HCT116 (cell line): ENCODE measurements at regions of chr6 and their contacts with region 1.

Region 1: DNA sequence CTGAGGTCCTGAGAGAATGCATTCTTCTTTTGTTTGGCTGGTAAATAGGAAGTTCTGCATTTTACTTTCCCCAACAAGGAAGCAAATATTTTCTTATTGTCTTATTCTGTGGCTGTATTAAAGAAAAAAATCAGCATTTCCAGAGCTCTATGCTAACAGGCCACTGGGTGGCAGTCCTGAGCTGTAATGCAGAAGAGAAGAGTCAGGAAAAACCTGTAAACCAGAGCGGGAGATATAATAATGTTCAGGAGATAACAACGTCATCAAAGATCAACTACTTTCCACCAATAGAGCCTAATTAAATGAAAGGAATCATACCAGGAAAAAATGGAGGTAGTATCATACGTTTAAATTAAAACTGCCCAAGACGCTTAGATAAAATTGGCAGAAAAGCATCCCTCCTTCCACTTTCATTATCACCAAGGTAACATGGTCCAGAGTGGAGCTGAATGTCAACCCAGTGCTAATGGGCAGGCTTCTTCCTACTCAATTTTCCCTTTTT is 55.6 kb upstream of the CARMIL1 start:
- DNase-seq: peak; percentile 61
- ATAC-seq: peak; percentile 80
- H3K4me3 ChIP-seq: peak overlapping the region; percentile 18 to 23; a peak in 3 of 4 replicates
- H3K27ac ChIP-seq: no peak overlapping the region
- H3K4me1 ChIP-seq: no peaks in the 10 kb centered on the region; a peak in 1 of 4 replicates
- H3K27me3 ChIP-seq: no peaks in the 10 kb centered on the region
- CTCF ChIP-seq: peak; percentile 76 to 95 (median 89)
- POLR2A ChIP-seq: no peak
- RAD21 ChIP-seq: peak; percentile 93

Region 2: GRCh38 chr6:25490018-25490801 is 266.7 kb after region 1 on chr6:
- CTCF ChIA-PET with region 1: interaction called, 23 read pairs
- POLR2A ChIA-PET with region 1: no interaction called
- RAD21 ChIA-PET with region 1: no interaction called
- intact Hi-C with region 1: loop called (anchors 1 kb)
- DNase-seq: peak; percentile 69
- ATAC-seq: peak; percentile 98
- H3K4me3 ChIP-seq: no peak overlapping the region
- H3K27ac ChIP-seq: no peak overlapping the region
- H3K4me1 ChIP-seq: peaks cover 0 to 16% of the 10 kb centered on the region in 2 experiments; a peak in 1 of 4 replicates
- H3K27me3 ChIP-seq: no peaks in the 10 kb centered on the region
- CTCF ChIP-seq: peak; percentile 83 to 84 (median 84)
- POLR2A ChIP-seq: no peak
- RAD21 ChIP-seq: peak; percentile 88

Region 3: GRCh38 chr6:25556516-25556915 is 333.0 kb after region 1 on chr6:
- CTCF ChIA-PET with region 1: interaction called, 28 read pairs
- POLR2A ChIA-PET with region 1: interaction called, 3 read pairs
- RAD21 ChIA-PET with region 1: interaction called in 1 of 2 experiments, 3 read pairs
- intact Hi-C with region 1: loop called (anchors 2 kb)
- DNase-seq: peak; percentile 71
- ATAC-seq: peak; percentile 87
- H3K4me3 ChIP-seq: no peak overlapping the region
- H3K27ac ChIP-seq: no peak overlapping the region
- H3K4me1 ChIP-seq: no peaks in the 10 kb centered on the region
- H3K27me3 ChIP-seq: no peaks in the 10 kb centered on the region
- CTCF ChIP-seq: peak; percentile 56 to 89 (median 79)
- POLR2A ChIP-seq: no peak
- RAD21 ChIP-seq: peak; percentile 65

Region 4: DNA sequence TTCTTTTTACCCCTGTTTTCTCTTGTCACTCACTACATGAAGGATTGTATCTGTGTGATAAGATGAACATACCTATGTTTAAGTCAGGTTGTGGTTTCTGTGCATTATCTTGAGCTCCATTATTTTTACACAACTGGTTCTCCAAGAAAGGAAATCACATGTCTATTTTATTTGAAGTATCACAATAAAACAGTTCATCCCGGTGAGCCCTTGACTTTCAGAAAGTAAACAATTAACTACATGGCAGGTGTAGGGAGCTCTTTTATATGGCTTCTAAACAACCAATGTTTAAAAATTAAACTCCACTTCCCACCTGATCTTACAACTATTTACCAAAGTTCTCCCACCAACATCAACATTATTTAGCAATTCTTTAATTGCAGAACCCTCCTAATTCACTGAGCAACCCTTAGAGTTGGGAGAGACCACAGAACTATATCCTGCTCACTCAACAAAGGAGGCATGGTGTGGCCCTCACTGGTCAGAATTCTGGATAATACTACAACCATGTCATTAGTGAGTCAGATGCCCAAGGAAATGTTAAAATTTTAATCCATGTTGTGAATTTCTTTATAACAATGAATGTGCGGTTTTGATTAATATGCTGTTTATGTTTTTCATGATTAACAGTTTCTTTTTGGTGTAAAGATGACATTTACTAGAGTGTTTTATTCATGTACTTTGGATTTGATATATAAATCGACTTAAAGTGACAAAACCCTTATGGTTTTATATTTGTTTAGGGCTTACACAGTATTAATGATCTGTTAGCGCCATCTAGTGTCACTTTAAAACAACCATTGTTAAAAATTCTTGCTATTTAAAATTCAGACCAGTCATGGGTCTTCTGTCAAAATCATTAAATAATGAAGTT is 378.5 kb after region 1 on chr6:
- CTCF ChIA-PET with region 1: interaction called, 11 read pairs
- POLR2A ChIA-PET with region 1: no interaction called
- RAD21 ChIA-PET with region 1: no interaction called
- intact Hi-C with region 1: loop called (anchors 1 kb)
- DNase-seq: peak; percentile 28
- ATAC-seq: no peak; the same call in 1 of the 2 replicates
- H3K4me3 ChIP-seq: no peak overlapping the region
- H3K27ac ChIP-seq: no peak overlapping the region
- H3K4me1 ChIP-seq: no peaks in the 10 kb centered on the region
- H3K27me3 ChIP-seq: no peaks in the 10 kb centered on the region
- CTCF ChIP-seq: peak; percentile 28 to 75 (median 67); a peak in 4 of 6 replicates
- POLR2A ChIP-seq: no peak
- RAD21 ChIP-seq: peak; percentile 74

Region 5: GRCh38 chr6:25889877-25890853 is 666.6 kb after region 1 on chr6:
- CTCF ChIA-PET with region 1: interaction called, 5 read pairs
- POLR2A ChIA-PET with region 1: no interaction called
- RAD21 ChIA-PET with region 1: no interaction called
- intact Hi-C with region 1: loop called (anchors 1 kb)
- DNase-seq: peak; percentile 27
- ATAC-seq: peak; percentile 91
- H3K4me3 ChIP-seq: no peak overlapping the region
- H3K27ac ChIP-seq: no peak overlapping the region
- H3K4me1 ChIP-seq: no peaks in the 10 kb centered on the region
- H3K27me3 ChIP-seq: no peaks in the 10 kb centered on the region
- CTCF ChIP-seq: peak; percentile 31 to 67 (median 59); a peak in 5 of 6 replicates
- POLR2A ChIP-seq: no peak
- RAD21 ChIP-seq: peak; percentile 86

Region 6: GRCh38 chr6:25942561-25943147 is 719.1 kb after region 1 on chr6:
- CTCF ChIA-PET with region 1: no interaction called
- POLR2A ChIA-PET with region 1: no interaction called
- RAD21 ChIA-PET with region 1: no interaction called
- intact Hi-C with region 1: loop called (anchors 5 kb)
- DNase-seq: peak; percentile 48
- ATAC-seq: peak; percentile 84
- H3K4me3 ChIP-seq: no peak overlapping the region
- H3K27ac ChIP-seq: no peak overlapping the region
- H3K4me1 ChIP-seq: no peaks in the 10 kb centered on the region
- H3K27me3 ChIP-seq: no peaks in the 10 kb centered on the region
- CTCF ChIP-seq: peak; percentile 42 to 73 (median 60); a peak in 4 of 6 replicates
- POLR2A ChIP-seq: no peak
- RAD21 ChIP-seq: peak; percentile 88